Sigmoid colon (tissue), 7 donors: ENCODE measurements at regions of chr3 and their contacts with region 1.

Region 1: DNA sequence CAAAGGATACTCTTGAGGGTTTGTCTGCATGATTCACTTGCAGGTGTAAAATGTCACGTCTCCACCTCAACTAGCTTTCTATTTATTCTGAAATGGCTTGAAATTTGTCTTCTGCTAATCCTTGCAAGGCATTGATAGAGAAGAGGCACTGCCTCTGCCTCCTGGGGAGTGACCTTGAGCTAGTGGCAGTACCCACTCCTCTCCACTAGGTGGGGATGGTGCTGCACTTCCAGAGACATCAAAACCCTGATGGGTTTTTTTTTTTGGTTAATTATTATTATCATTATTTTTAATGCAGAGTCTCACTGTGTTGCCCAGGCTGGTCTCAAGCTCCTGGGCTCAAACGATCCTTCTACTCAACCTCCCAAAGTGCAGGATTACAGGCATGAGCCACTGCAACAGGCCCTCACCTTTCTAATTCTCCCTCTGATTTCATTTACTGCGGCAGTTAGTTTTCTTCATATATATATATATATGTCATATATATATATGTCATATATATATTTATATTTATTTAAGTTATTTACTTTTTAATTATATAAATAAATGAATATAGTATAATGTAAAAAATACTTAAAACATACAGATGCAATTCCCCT is 117.6 kb upstream of the EIF1B start:
- DNase-seq: no peak
- H3K4me3 ChIP-seq: no peak overlapping the region
- H3K27ac ChIP-seq: no peak overlapping the region
- H3K4me1 ChIP-seq: no peaks in the 10 kb centered on the region
- H3K27me3 ChIP-seq: no peaks in the 10 kb centered on the region
- CTCF ChIP-seq: peak in 3 of 4 experiments; percentile 57 to 90 (median 67)
- EP300 ChIP-seq: no peak
- POLR2A ChIP-seq: no peak

Region 2: DNA sequence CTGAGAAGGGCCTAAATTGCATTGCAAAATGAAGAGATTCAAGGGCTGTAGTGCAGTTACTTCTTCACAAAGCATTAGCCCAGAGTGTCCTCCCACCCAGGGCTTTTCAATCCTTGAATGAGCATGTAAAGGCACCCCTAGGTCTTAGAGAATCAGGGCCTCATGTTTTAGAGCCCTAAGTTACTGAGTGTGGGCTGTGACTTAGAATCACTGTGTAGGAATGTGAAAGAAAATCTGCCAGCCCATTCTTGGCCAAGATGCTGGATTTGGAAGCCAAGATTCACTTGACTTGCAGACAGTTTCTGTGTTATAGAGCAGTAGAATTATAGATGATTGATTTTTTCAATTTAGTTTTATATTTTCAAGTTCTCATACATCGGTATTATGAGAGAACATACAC is 229.4 kb before region 1 on chr3:
- intact Hi-C with region 1: no loop called
- DNase-seq: no peak
- H3K4me3 ChIP-seq: no peak overlapping the region
- H3K27ac ChIP-seq: peak overlapping the region in 3 of 4 donors; percentile 47 to 59 (median 53)
- H3K4me1 ChIP-seq: peaks cover 0 to 36% (median 32%) of the 10 kb centered on the region in 4 donors
- H3K27me3 ChIP-seq: no peaks in the 10 kb centered on the region
- CTCF ChIP-seq: no peak
- EP300 ChIP-seq: no peak
- POLR2A ChIP-seq: no peak

Region 3: GRCh38 chr3:40035177-40035576 is 156.8 kb before region 1 on chr3:
- intact Hi-C with region 1: no loop called
- DNase-seq: no peak
- H3K4me3 ChIP-seq: no peak overlapping the region
- H3K27ac ChIP-seq: no peak overlapping the region
- H3K4me1 ChIP-seq: no peaks in the 10 kb centered on the region
- H3K27me3 ChIP-seq: no peaks in the 10 kb centered on the region
- CTCF ChIP-seq: no peak
- EP300 ChIP-seq: no peak
- POLR2A ChIP-seq: no peak

Region 4: GRCh38 chr3:40224796-40225515 is 33.0 kb after region 1 on chr3:
- intact Hi-C with region 1: no loop called
- DNase-seq: no peak
- H3K4me3 ChIP-seq: no peak overlapping the region
- H3K27ac ChIP-seq: no peak overlapping the region
- H3K4me1 ChIP-seq: peaks cover 0 to 6% (median 0%) of the 10 kb centered on the region in 4 donors
- H3K27me3 ChIP-seq: no peaks in the 10 kb centered on the region
- CTCF ChIP-seq: no peak
- EP300 ChIP-seq: no peak
- POLR2A ChIP-seq: no peak

Region 5: GRCh38 chr3:40317061-40317855 is 125.3 kb after region 1 on chr3:
- intact Hi-C with region 1: loop called (anchors 5 kb)
- DNase-seq: no peak
- H3K4me3 ChIP-seq: no peak overlapping the region
- H3K27ac ChIP-seq: no peak overlapping the region
- H3K4me1 ChIP-seq: peaks cover 0 to 11% (median 10%) of the 10 kb centered on the region in 4 donors
- H3K27me3 ChIP-seq: no peaks in the 10 kb centered on the region
- CTCF ChIP-seq: peak; percentile 43 to 79 (median 56)
- EP300 ChIP-seq: no peak
- POLR2A ChIP-seq: no peak

Region 6: GRCh38 chr3:40803311-40803710 is 611.4 kb after region 1 on chr3:
- intact Hi-C with region 1: no loop called
- DNase-seq: no peak
- H3K4me3 ChIP-seq: no peak overlapping the region
- H3K27ac ChIP-seq: no peak overlapping the region
- H3K4me1 ChIP-seq: no peaks in the 10 kb centered on the region
- H3K27me3 ChIP-seq: no peaks in the 10 kb centered on the region
- CTCF ChIP-seq: no peak
- EP300 ChIP-seq: no peak
- POLR2A ChIP-seq: no peak